BJ (cell line): ENCODE measurements at regions of chr12 and their contacts with region 1.

Region 1: GRCh38 chr12:121550974-121551634 is 29.7 kb downstream of the KDM2B start:
- DNase-seq: no peak
- H3K4me3 ChIP-seq: no peak overlapping the region
- H3K27me3 ChIP-seq: no peaks in the 10 kb centered on the region
- CTCF ChIP-seq: no peak

Region 2: DNA sequence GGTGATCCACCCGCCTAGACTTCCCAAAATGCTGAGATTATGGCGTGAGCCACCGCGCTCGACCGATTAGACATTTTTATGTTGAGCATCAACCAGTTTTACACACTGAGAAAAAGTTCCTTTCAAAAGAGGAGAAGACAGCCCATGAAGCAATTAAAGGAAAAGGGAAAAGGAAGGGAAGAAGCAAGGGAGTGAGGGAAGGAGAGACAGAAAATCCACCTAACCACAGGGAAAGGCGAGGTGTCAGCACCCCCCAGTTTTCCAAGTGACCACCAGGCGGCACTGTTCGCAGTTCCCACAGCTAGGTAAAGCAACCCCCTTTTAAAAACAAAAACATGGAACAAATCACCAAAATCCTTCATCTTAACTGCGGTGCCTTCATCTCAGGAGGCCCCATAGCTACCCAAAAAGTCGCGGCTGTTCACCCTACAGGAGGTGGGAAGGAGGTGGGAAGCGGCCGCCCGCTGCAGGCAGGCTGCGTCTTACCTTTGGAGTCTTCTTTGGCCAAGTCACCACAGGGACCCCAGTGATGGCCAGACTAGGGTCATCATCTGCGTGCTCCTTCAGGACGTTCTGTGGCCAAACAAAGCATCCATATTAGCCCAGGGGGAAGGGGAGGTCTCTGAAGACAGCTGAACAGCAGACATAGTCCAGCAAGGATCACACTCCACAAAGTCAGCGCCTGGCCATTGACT is 56.9 kb before region 1 on chr12:
- CTCF ChIA-PET with region 1: interaction called, 11 read pairs
- POLR2A ChIA-PET with region 1: no interaction called
- DNase-seq: no peak
- H3K4me3 ChIP-seq: no peak overlapping the region
- H3K27me3 ChIP-seq: no peaks in the 10 kb centered on the region
- CTCF ChIP-seq: peak; percentile 94

Region 3: GRCh38 chr12:121568971-121569751 is 18.1 kb after region 1 on chr12:
- CTCF ChIA-PET with region 1: interaction called, 26 read pairs
- POLR2A ChIA-PET with region 1: no interaction called
- DNase-seq: no peak
- H3K4me3 ChIP-seq: no peak overlapping the region
- H3K27me3 ChIP-seq: no peaks in the 10 kb centered on the region
- CTCF ChIP-seq: no peak

Region 4: DNA sequence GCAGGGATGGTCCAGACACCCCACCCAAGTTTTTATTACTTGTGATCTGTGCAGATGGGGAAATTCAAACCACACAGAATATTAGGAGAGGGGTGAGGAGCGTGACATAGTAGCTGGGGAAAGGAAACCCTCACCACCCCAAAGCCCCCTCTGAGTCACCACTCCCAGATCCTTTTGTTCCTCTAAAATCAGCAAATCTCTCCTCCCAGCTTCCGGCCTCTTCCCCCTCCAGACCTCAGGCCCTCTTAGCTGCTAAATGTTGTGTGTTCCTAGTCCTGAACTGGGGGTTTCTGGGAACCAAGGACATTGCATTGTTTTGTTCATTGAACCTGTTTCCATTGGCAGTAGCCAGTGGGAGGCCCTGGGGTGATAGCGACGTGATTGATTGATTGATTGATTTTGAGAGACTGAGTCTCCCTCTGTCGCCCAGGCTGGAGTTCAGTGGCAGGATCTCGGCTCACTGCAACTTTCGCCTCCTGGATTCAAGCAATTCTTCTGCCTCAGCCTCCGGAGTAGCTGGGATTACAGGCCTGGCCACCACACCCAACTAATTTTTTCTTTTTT is 69.3 kb after region 1 on chr12:
- CTCF ChIA-PET with region 1: interaction called, 75 read pairs
- POLR2A ChIA-PET with region 1: no interaction called
- DNase-seq: no peak
- H3K4me3 ChIP-seq: no peak overlapping the region
- H3K27me3 ChIP-seq: no peaks in the 10 kb centered on the region
- CTCF ChIP-seq: no peak

Region 5: GRCh38 chr12:121668750-121669520 is 117.8 kb after region 1 on chr12:
- CTCF ChIA-PET with region 1: interaction called, 89 read pairs
- POLR2A ChIA-PET with region 1: no interaction called
- DNase-seq: no peak
- H3K4me3 ChIP-seq: no peak overlapping the region
- H3K27me3 ChIP-seq: no peaks in the 10 kb centered on the region
- CTCF ChIP-seq: peak; percentile 70

Region 6: GRCh38 chr12:121705514-121705913 is 154.4 kb after region 1 on chr12:
- CTCF ChIA-PET with region 1: no interaction called
- POLR2A ChIA-PET with region 1: interaction called, 23 read pairs
- DNase-seq: no peak
- H3K4me3 ChIP-seq: no peak overlapping the region
- H3K27me3 ChIP-seq: no peaks in the 10 kb centered on the region
- CTCF ChIP-seq: no peak

Region 7: GRCh38 chr12:121955258-121956235 is 404.4 kb after region 1 on chr12:
- CTCF ChIA-PET with region 1: no interaction called
- POLR2A ChIA-PET with region 1: no interaction called
- DNase-seq: no peak
- H3K4me3 ChIP-seq: no peak overlapping the region
- H3K27me3 ChIP-seq: no peaks in the 10 kb centered on the region
- CTCF ChIP-seq: peak; percentile 72